ENCODE measurements at regions of chr12 and their contacts with region 1.

Region 1: GRCh38 chr12:75480469-75480949 is at the start of gene GLIPR1:
- DNase-seq: peak; percentile 79
- ATAC-seq: peak; percentile 82
- H3K4me3 ChIP-seq: peak within 1 kb of the TSS; percentile 66 to 98 (median 80)
- H3K4me3 Mint-ChIP-seq: peak within 1 kb of the TSS; percentile 98
- H3K27ac ChIP-seq: peak within 1 kb of the TSS; percentile 75 to 79
- H3K27ac Mint-ChIP-seq: peak within 1 kb of the TSS; percentile 99
- H3K4me1 ChIP-seq: peaks cover 61 to 64% of the 10 kb centered on the region in 2 donors
- H3K4me1 Mint-ChIP-seq: peaks cover 79% of the 10 kb centered on the region
- H3K27me3 ChIP-seq: no peaks in the 10 kb centered on the region
- H3K27me3 Mint-ChIP-seq: no peaks in the 10 kb centered on the region
- CTCF ChIP-seq: no peak
- total RNA-seq, gene GLIPR1: 117 and 119 TPM in 2 replicates

Region 2: GRCh38 chr12:75196865-75197264 is 283.6 kb before region 1 on chr12:
- CTCF ChIA-PET with region 1: no interaction called
- POLR2A ChIA-PET with region 1: no interaction called
- intact Hi-C with region 1: no loop called
- DNase-seq: no peak
- ATAC-seq: no peak
- H3K4me3 ChIP-seq: no peak overlapping the region
- H3K4me3 Mint-ChIP-seq: no peak overlapping the region
- H3K27ac ChIP-seq: no peak overlapping the region
- H3K27ac Mint-ChIP-seq: no peak overlapping the region
- H3K4me1 ChIP-seq: no peaks in the 10 kb centered on the region
- H3K4me1 Mint-ChIP-seq: no peaks in the 10 kb centered on the region
- H3K27me3 ChIP-seq: no peaks in the 10 kb centered on the region
- H3K27me3 Mint-ChIP-seq: peaks cover 2% of the 10 kb centered on the region
- CTCF ChIP-seq: no peak

Region 3: GRCh38 chr12:75390899-75391538 is 89.5 kb before region 1 on chr12 and contains the start of gene GLIPR1L2:
- CTCF ChIA-PET with region 1: interaction called, 92 read pairs
- POLR2A ChIA-PET with region 1: interaction called, 9 read pairs
- intact Hi-C with region 1: loop called (anchors 1 kb)
- DNase-seq: peak; percentile 94
- ATAC-seq: peak; percentile 94
- H3K4me3 ChIP-seq: peak within 1 kb of the TSS; percentile 66 to 85 (median 75)
- H3K4me3 Mint-ChIP-seq: peak within 1 kb of the TSS; percentile 98
- H3K27ac ChIP-seq: peak within 1 kb of the TSS; percentile 73 to 85
- H3K27ac Mint-ChIP-seq: peak within 1 kb of the TSS; percentile 99
- H3K4me1 ChIP-seq: peaks cover 23 to 24% of the 10 kb centered on the region in 2 donors
- H3K4me1 Mint-ChIP-seq: peaks cover 33% of the 10 kb centered on the region
- H3K27me3 ChIP-seq: no peaks in the 10 kb centered on the region
- H3K27me3 Mint-ChIP-seq: no peaks in the 10 kb centered on the region
- CTCF ChIP-seq: peak; percentile 81
- total RNA-seq, gene GLIPR1L2: 0.46 and 0.91 TPM in 2 replicates

Region 4: DNA sequence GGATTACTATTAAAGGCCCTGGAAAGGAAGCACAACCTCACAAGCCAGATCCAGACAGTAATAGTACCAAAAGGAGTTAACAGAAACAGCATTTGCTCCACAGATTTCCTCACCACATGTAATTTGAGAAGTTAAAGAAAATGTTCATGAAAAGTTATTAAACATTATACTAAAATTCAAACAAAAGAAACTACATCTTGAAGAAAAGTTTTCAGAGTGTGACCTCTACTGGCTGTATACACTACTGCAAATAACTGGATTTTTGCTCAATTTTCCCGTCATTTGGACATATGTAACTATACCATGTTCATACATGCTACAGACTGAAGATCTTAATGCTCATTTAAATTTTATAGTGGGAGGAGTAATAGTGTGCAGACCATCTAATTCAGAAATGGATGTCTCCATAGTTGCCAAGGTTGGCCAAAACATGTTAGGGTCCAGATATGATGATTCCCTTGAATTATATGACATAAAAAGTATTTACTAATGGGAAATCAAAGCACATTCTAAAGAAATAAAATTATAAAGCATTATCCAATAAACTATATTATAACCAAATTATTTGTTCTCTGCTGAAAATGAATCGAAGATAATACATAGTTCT is 25.3 kb after region 1 on chr12:
- CTCF ChIA-PET with region 1: interaction called, 124 read pairs
- POLR2A ChIA-PET with region 1: interaction called, 3 read pairs
- intact Hi-C with region 1: loop called (anchors 1 kb)
- DNase-seq: peak; percentile 53
- ATAC-seq: peak; percentile 57
- H3K4me3 ChIP-seq: no peak overlapping the region
- H3K4me3 Mint-ChIP-seq: no peak overlapping the region
- H3K27ac ChIP-seq: peak overlapping the region; percentile 4 to 37
- H3K27ac Mint-ChIP-seq: no peak overlapping the region
- H3K4me1 ChIP-seq: peaks cover 5 to 12% of the 10 kb centered on the region in 2 donors
- H3K4me1 Mint-ChIP-seq: peaks cover 18% of the 10 kb centered on the region
- H3K27me3 ChIP-seq: no peaks in the 10 kb centered on the region
- H3K27me3 Mint-ChIP-seq: no peaks in the 10 kb centered on the region
- CTCF ChIP-seq: peak; percentile 82

Region 5: DNA sequence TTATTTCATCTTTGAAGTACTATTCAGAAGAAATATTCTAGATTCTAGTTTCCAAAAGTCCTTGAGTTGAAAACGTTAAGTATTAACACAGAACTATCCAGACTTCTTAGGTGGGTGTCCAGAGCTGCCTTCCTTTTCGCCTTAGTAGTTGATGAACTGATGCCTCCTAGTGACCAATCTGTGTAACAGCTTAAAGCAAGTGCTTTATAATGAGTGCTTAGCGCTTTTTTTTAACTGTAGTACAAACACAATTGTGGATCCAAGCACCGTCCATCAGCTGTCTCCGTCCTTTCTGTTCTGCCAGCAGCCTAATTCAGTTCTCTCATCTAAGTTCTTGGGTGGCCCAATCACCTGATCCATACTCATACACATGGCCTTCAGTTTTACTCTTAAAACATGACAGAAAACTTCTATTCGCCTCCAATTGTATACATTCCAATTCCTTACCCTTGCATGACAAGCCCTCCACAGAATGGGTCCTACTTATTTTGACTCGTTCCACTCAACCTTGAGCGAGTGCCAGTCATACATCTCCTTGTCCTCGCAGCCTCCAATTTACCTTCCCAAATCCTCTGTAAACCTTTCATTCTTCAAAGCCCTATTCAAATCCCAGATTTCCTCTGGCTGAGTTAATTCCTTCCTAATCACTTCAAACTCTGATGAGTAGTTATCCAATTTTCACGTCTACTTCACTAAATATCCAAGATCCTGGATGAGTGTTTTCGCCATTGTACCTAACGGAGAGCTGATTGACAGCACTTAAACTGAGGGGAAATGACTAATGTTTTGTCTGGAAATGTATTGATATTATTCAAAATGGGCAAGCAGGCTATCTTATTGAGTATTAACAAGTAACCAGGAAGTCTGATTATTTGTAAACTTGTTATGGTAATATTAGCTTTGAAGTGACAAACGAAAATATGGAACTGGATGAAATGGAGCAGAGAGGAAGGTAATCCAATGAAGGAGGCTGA is 556.9 kb after region 1 on chr12:
- CTCF ChIA-PET with region 1: interaction called, 12 read pairs
- POLR2A ChIA-PET with region 1: no interaction called
- intact Hi-C with region 1: no loop called
- DNase-seq: peak; percentile 76
- ATAC-seq: peak; percentile 71
- H3K4me3 ChIP-seq: no peak overlapping the region
- H3K4me3 Mint-ChIP-seq: no peak overlapping the region
- H3K27ac ChIP-seq: no peak overlapping the region
- H3K27ac Mint-ChIP-seq: no peak overlapping the region
- H3K4me1 ChIP-seq: peaks cover 3 to 4% of the 10 kb centered on the region in 2 donors
- H3K4me1 Mint-ChIP-seq: peaks cover 9% of the 10 kb centered on the region
- H3K27me3 ChIP-seq: no peaks in the 10 kb centered on the region
- H3K27me3 Mint-ChIP-seq: no peaks in the 10 kb centered on the region
- CTCF ChIP-seq: peak; percentile 85

Region 6: DNA sequence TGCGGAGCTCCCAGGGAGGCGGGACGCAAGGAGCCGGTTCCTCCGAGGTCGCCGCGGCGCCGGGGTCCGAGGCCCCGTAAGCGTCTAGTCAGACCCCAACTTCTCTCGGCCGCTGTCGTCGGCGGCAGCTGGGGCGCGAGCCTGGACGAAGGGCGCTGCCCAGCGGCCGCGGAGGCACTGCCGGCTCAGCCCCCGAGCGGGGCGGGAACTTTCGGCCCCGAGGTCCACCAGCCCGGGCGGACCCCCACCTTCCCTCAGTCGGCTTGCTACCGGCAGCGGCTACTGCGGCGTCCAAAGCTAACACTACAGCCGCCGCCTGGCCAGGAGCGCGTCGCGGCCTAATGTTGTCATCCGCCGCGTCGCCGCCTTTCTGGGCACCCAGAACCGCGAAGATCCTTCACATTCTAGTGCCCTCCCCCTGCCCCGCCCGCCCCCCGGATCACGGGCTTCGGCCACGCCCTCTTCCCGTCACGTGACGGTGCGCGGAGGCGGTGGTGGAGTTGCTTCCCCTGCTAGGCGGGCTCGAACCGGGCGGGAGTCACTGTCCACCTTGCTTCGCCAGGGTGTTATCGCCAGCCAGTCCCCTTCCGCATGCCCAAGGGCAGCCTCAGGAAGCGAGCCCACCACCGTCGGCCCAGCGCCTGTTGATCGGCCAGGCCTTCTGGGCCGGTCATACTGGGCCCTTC is 1079.0 kb after region 1 on chr12 and contains the start of gene OSBPL8:
- CTCF ChIA-PET with region 1: no interaction called
- POLR2A ChIA-PET with region 1: no interaction called
- intact Hi-C with region 1: loop called (anchors 5 kb)
- DNase-seq: peak; percentile 95
- ATAC-seq: peak; percentile 79
- H3K4me3 ChIP-seq: peak within 1 kb of the TSS; percentile 76 to 99 (median 93)
- H3K4me3 Mint-ChIP-seq: peak within 1 kb of the TSS; percentile 98
- H3K27ac ChIP-seq: peak within 1 kb of the TSS; percentile 93 to 96
- H3K27ac Mint-ChIP-seq: peak within 1 kb of the TSS; percentile 98
- H3K4me1 ChIP-seq: peaks cover 29 to 46% of the 10 kb centered on the region in 2 donors
- H3K4me1 Mint-ChIP-seq: peaks cover 44% of the 10 kb centered on the region
- H3K27me3 ChIP-seq: no peaks in the 10 kb centered on the region
- H3K27me3 Mint-ChIP-seq: no peaks in the 10 kb centered on the region
- CTCF ChIP-seq: no peak
- total RNA-seq, gene OSBPL8: 112 and 116 TPM in 2 replicates

Measured in B cell (primary cell).